ENCODE measurements at regions of chr2 and their contacts with region 1.

Region 1: DNA sequence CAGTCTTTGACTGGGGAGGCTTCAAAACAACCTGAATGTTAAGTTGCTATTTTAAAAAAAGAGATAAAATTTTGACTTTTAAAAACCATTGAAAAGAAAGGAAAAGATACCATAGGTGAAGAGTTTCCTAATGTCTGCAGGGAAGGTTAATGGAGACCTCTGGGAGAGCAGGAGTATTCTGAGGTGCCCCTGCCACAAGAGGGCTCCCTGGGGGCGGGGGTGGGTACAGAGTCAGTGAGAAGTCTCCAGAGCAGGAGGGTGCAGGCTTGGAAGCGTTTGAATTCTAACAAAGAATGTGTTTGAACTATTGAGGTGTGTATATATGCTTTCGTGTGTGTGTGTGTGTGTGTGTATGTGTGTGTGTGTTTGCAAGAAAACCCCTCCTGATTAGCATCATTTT is 46.7 kb upstream of the ST6GAL2 start:
- DNase-seq: no peak

Region 2: DNA sequence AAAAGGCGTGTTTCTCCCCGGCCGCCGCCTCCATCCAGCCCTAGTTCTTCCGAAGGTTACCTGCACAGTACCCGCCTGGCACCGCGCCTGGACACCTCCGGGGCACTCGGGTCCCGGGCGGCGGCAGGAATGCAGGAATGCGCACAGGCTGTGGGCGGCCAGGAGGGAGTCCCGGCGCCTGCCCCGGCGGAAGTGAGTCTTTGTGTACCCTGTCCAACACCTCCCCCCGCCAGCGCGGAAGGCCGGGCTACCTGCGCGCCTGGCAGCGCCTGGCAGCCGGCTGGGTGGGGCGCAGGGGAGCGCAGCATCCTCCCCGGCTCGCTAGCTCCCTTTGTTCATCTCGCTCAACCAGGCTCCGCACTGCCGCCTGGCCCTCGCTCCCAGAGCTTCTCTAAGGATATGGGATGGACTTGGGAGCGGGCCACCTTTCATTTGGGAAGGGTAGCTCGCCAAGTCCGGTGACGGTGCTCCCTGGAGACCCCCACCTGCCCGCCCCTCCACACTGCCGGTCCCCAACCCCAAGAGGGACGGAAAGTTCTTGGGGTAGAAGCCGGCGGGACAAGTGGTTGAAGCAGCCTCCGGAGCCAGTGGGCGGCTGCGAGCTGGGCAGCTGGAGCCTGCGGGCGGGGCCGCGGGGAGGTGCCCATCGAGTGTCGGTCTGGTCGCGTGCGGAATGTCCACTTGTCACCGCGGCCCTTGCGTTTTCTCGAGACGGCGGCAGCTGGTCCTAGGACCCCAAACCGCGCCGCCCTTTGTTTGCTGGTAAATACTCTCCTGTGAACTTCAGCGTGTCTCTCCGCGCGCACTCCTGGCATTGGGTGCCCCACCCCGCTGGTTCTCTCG is 45.5 kb before region 1 on chr2:
- intact Hi-C with region 1: loop called in 1 of 2 experiments (anchors 2 kb)
- DNase-seq: peak; percentile 85

Measured in posterior vena cava (tissue), 2 donors.